ENCODE measurements at regions of chr15 and their contacts with region 1.

Region 1: GRCh38 chr15:34109797-34110663 is 8.1 kb downstream of the PGBD4 start:
- DNase-seq: no peak
- H3K4me3 ChIP-seq: no peak overlapping the region
- H3K27ac ChIP-seq: no peak overlapping the region
- H3K4me1 ChIP-seq: no peaks in the 10 kb centered on the region; a peak in 1 of 7 replicates
- H3K27me3 ChIP-seq: no peaks in the 10 kb centered on the region
- CTCF ChIP-seq: peak in 2 of 3 experiments; percentile 60 to 61; a peak in 2 of 4 replicates
- EP300 ChIP-seq: no peak
- POLR2A ChIP-seq: no peak
- RAD21 ChIP-seq: peak; percentile 84

Region 2: DNA sequence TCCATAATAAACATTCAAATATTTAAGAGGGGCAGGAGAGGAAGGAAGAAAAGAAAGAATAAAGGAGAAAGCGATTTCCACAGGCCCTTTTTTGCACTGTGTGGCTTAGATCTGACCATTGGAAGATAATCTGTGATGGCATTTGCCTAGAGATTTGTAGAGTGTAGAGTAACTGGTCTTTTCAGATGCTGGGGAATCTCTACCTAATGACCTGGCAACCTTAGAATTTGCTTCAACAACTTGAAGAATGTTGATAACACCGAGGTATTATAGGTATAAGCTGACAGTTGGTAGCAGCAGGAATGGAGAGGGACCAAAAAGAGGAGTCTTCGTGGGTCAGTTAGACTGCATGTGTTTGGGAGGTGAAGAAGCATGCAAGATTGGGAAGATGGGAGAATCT is 50.1 kb before region 1 on chr15:
- CTCF ChIA-PET with region 1: interaction called, 13 read pairs
- POLR2A ChIA-PET with region 1: interaction called, 3 read pairs
- DNase-seq: no peak
- H3K4me3 ChIP-seq: no peak overlapping the region
- H3K27ac ChIP-seq: no peak overlapping the region
- H3K4me1 ChIP-seq: no peaks in the 10 kb centered on the region
- H3K27me3 ChIP-seq: no peaks in the 10 kb centered on the region
- CTCF ChIP-seq: no peak
- EP300 ChIP-seq: no peak
- POLR2A ChIP-seq: no peak
- RAD21 ChIP-seq: no peak

Region 3: GRCh38 chr15:34122771-34123183 is 12.7 kb after region 1 on chr15:
- CTCF ChIA-PET with region 1: interaction called, 33 read pairs
- POLR2A ChIA-PET with region 1: interaction called, 5 read pairs
- DNase-seq: no peak
- H3K4me3 ChIP-seq: no peak overlapping the region
- H3K27ac ChIP-seq: no peak overlapping the region
- H3K4me1 ChIP-seq: no peaks in the 10 kb centered on the region
- H3K27me3 ChIP-seq: no peaks in the 10 kb centered on the region
- CTCF ChIP-seq: no peak
- EP300 ChIP-seq: no peak
- POLR2A ChIP-seq: no peak
- RAD21 ChIP-seq: no peak

Region 4: GRCh38 chr15:34132881-34133280 is 22.9 kb after region 1 on chr15:
- CTCF ChIA-PET with region 1: interaction called, 26 read pairs
- POLR2A ChIA-PET with region 1: interaction called, 5 read pairs
- DNase-seq: no peak
- H3K4me3 ChIP-seq: no peak overlapping the region
- H3K27ac ChIP-seq: no peak overlapping the region
- H3K4me1 ChIP-seq: no peaks in the 10 kb centered on the region
- H3K27me3 ChIP-seq: no peaks in the 10 kb centered on the region
- CTCF ChIP-seq: no peak
- EP300 ChIP-seq: no peak
- POLR2A ChIP-seq: no peak
- RAD21 ChIP-seq: no peak

Region 5: GRCh38 chr15:34209421-34210282 is 99.6 kb after region 1 on chr15 and contains the start of gene KATNBL1:
- CTCF ChIA-PET with region 1: interaction called, 74 read pairs
- POLR2A ChIA-PET with region 1: interaction called, 15 read pairs
- DNase-seq: peak; percentile 84 to 99
- H3K4me3 ChIP-seq: peak within 1 kb of the TSS; percentile 45 to 93 (median 73)
- H3K27ac ChIP-seq: peak within 1 kb of the TSS; percentile 84; the same call in 1 of the 2 replicates
- H3K4me1 ChIP-seq: peaks cover 5 to 16% (median 15%) of the 10 kb centered on the region in 4 experiments; a peak in 5 of 7 replicates
- H3K27me3 ChIP-seq: no peaks in the 10 kb centered on the region
- CTCF ChIP-seq: peak; percentile 87 to 94 (median 93)
- EP300 ChIP-seq: peak in 1 of 2 experiments; percentile 4; a peak in 1 of 3 replicates
- POLR2A ChIP-seq: peak; percentile 76 to 91
- RAD21 ChIP-seq: peak; percentile 85 to 91
- total RNA-seq, gene KATNBL1: 50.3 and 51.4 TPM in 2 replicates

Region 6: GRCh38 chr15:34217587-34218225 is 107.7 kb after region 1 on chr15:
- CTCF ChIA-PET with region 1: interaction called, 74 read pairs
- POLR2A ChIA-PET with region 1: interaction called, 4 read pairs
- DNase-seq: no peak
- H3K4me3 ChIP-seq: no peak overlapping the region
- H3K27ac ChIP-seq: no peak overlapping the region
- H3K4me1 ChIP-seq: peaks cover 1 to 15% (median 11%) of the 10 kb centered on the region in 4 experiments; a peak in 5 of 7 replicates
- H3K27me3 ChIP-seq: no peaks in the 10 kb centered on the region
- CTCF ChIP-seq: no peak
- EP300 ChIP-seq: no peak
- POLR2A ChIP-seq: no peak
- RAD21 ChIP-seq: no peak